ENCODE measurements at regions of chr10 and their contacts with region 1.

Region 1: GRCh38 chr10:99659031-99659867 is at the start of gene ENTPD7:
- DNase-seq: peak; percentile 93
- ATAC-seq: peak; percentile 98
- H3K4me3 ChIP-seq: peak within 1 kb of the TSS; percentile 93 to 95 (median 93)
- H3K27ac ChIP-seq: peak within 1 kb of the TSS; percentile 81
- H3K4me1 ChIP-seq: peaks cover 49% of the 10 kb centered on the region
- H3K27me3 ChIP-seq: no peaks in the 10 kb centered on the region; a peak in 1 of 5 replicates
- CTCF ChIP-seq: peak; percentile 33
- EP300 ChIP-seq: no peak
- POLR2A ChIP-seq: peak; percentile 86 to 89
- RAD21 ChIP-seq: peak; percentile 27
- total RNA-seq, gene ENTPD7: 35.5 and 36.5 TPM in 2 replicates

Region 2: DNA sequence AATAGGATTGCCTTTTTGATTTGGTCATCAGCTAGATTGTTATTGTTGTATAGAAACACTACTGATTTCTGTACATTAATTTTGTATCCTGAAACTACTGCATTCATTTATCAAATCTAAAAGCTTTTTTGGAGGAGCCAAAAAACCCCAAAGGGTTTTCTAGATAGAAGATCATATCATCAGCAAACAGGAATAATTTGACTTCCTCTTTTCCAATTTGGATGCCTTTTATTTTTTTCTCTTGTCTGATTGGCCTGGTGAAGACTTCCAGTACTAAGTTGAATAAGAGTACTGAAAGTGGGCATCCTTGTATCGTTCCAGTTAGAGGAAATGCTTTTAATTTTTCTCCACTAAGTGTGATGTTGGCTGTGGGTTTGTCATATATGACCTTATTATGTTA is 10.5 kb before region 1 on chr10:
- CTCF ChIA-PET with region 1: no interaction called
- POLR2A ChIA-PET with region 1: interaction called, 23 read pairs
- in situ Hi-C with region 1: no loop called
- intact Hi-C with region 1: no loop called
- DNase-seq: no peak
- ATAC-seq: no peak
- H3K4me3 ChIP-seq: no peak overlapping the region
- H3K27ac ChIP-seq: no peak overlapping the region
- H3K4me1 ChIP-seq: peaks cover 31% of the 10 kb centered on the region
- H3K27me3 ChIP-seq: no peaks in the 10 kb centered on the region
- CTCF ChIP-seq: no peak
- EP300 ChIP-seq: no peak
- POLR2A ChIP-seq: no peak
- RAD21 ChIP-seq: no peak

Region 3: DNA sequence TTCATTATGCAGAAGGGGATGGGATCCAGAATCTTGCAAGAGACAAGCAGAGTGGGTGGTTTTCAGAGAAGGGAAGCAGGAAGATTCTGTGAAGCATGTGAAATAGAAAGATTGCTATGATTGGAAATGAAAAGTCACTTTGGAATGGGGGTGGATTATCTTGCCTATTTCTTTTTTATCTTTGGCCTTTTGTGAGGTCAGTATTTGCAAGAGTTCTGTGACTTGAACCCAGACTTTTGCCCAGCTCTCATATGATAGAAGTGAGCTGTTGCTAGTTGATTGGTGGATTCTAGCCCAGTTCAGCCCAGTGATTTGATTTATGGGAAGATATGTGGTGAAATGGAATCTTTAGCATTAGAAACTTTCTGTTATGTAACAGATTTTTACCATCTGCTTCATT is 17.2 kb after region 1 on chr10:
- CTCF ChIA-PET with region 1: no interaction called
- POLR2A ChIA-PET with region 1: interaction called, 19 read pairs
- in situ Hi-C with region 1: no loop called
- intact Hi-C with region 1: loop called (anchors 2 kb)
- DNase-seq: no peak
- ATAC-seq: no peak
- H3K4me3 ChIP-seq: no peak overlapping the region
- H3K27ac ChIP-seq: no peak overlapping the region
- H3K4me1 ChIP-seq: peaks cover 28% of the 10 kb centered on the region
- H3K27me3 ChIP-seq: no peaks in the 10 kb centered on the region
- CTCF ChIP-seq: no peak
- EP300 ChIP-seq: no peak
- POLR2A ChIP-seq: no peak
- RAD21 ChIP-seq: no peak

Region 4: GRCh38 chr10:99711129-99711719 is 52.0 kb after region 1 on chr10:
- CTCF ChIA-PET with region 1: no interaction called
- POLR2A ChIA-PET with region 1: no interaction called
- in situ Hi-C with region 1: no loop called
- intact Hi-C with region 1: no loop called
- DNase-seq: peak; percentile 51
- ATAC-seq: peak; percentile 92
- H3K4me3 ChIP-seq: no peak overlapping the region
- H3K27ac ChIP-seq: no peak overlapping the region
- H3K4me1 ChIP-seq: no peaks in the 10 kb centered on the region
- H3K27me3 ChIP-seq: no peaks in the 10 kb centered on the region
- CTCF ChIP-seq: peak; percentile 78
- EP300 ChIP-seq: no peak
- POLR2A ChIP-seq: no peak
- RAD21 ChIP-seq: no peak